Motor neuron (in vitro differentiated cells): ENCODE measurements at regions of chr7 and their contacts with region 1.

Region 1: DNA sequence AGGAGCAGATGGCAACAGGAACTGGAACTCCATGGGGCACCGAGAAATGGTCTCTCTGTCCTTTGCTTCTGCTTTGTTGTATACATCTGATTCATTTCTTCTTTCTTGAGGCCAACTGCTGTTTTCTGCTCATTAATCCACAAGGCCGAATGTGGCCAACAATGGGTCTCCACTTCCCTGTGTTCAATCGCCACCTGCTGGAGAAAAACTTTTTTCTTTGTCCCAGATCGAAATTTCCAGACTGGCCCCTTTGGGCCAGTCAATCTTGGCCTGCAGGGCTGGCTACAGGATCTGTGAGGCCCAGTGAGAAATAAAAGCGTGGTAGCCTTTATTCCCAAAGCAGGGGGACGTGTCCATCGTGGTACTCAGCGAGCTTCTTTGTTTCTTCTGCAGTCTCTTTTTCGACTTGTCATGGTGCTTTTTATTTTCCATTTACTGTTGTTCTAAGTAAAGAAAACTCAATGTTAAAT is 58.8 kb downstream of the PARP12 start:
- ATAC-seq: peak in 4 of 8 experiments; percentile 25 to 69 (median 64)
- H3K4me3 ChIP-seq: no peak overlapping the region
- H3K27ac ChIP-seq: no peak overlapping the region
- H3K4me1 ChIP-seq: no peaks in the 10 kb centered on the region

Region 2: GRCh38 chr7:139431010-139431409 is 572.9 kb before region 1 on chr7:
- in situ Hi-C with region 1: loop called in 1 of 9 experiments (anchors 25 kb)
- ATAC-seq: peak in 3 of 8 experiments; percentile 14 to 43 (median 26)
- H3K4me3 ChIP-seq: no peak overlapping the region
- H3K27ac ChIP-seq: no peak overlapping the region
- H3K4me1 ChIP-seq: no peaks in the 10 kb centered on the region

Region 3: GRCh38 chr7:139482662-139483469 is 521.1 kb before region 1 on chr7:
- in situ Hi-C with region 1: loop called in 1 of 9 experiments (anchors 25 kb)
- ATAC-seq: peak; percentile 29 to 69 (median 62)
- H3K4me3 ChIP-seq: peak overlapping the region; percentile 26 to 31 (median 28)
- H3K27ac ChIP-seq: no peak overlapping the region
- H3K4me1 ChIP-seq: no peaks in the 10 kb centered on the region

Region 4: GRCh38 chr7:139620676-139621344 is 383.1 kb before region 1 on chr7:
- in situ Hi-C with region 1: loop called in 5 of 9 experiments (anchors 25 kb)
- ATAC-seq: peak in 4 of 8 experiments; percentile 45 to 65 (median 60)
- H3K4me3 ChIP-seq: no peak overlapping the region
- H3K27ac ChIP-seq: no peak overlapping the region
- H3K4me1 ChIP-seq: no peaks in the 10 kb centered on the region

Region 5: DNA sequence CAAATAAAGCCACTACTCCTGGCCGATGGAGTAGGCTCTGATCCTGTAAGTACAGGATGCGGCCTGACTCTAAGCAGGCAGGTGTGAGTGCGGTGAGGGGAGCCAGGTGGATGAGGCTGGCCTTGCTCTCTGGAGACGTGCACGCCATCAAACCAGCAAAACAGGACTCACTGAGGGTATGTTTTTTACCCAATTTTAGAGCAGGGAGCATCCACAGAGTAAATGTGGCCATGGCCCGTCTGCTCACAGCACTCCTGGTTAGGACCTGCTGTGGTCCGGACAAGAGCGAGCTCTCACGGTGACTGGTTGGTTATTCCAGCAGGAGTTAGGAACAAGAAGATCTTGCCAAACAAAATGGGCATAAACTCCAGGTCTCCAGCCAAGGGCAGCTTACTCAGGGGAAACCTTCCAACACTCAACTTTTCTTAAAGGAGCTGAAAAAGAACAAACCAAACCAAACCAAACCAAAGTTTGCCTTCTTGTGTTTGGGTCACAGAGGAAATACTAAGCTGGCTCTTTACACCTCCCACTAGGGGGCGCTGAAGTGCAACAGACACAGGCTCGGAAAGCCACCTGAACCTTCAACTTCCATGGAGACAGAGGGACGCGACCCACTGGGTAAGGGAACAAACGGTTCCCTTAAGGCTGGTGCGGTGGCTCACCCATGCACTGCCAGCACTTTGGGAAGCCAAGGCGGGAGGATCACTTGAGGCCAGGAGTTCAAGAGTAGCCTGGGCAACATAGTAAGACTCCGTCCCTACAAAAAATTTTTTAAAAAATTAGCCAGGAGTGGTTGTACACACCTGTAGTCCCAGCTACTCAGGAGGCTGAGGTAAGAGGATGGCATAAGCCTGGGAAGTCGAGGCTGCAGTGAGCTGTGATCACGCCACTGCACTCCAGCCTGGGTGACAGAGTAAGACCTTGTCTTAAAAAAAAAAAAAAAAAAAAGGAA is 358.1 kb before region 1 on chr7:
- in situ Hi-C with region 1: loop called in 6 of 9 experiments (anchors 10 to 25 kb)
- ATAC-seq: peak in 4 of 8 experiments; percentile 28 to 87 (median 78)
- H3K4me3 ChIP-seq: no peak overlapping the region
- H3K27ac ChIP-seq: no peak overlapping the region
- H3K4me1 ChIP-seq: peaks cover 27% of the 10 kb centered on the region in 2 donors

Region 6: DNA sequence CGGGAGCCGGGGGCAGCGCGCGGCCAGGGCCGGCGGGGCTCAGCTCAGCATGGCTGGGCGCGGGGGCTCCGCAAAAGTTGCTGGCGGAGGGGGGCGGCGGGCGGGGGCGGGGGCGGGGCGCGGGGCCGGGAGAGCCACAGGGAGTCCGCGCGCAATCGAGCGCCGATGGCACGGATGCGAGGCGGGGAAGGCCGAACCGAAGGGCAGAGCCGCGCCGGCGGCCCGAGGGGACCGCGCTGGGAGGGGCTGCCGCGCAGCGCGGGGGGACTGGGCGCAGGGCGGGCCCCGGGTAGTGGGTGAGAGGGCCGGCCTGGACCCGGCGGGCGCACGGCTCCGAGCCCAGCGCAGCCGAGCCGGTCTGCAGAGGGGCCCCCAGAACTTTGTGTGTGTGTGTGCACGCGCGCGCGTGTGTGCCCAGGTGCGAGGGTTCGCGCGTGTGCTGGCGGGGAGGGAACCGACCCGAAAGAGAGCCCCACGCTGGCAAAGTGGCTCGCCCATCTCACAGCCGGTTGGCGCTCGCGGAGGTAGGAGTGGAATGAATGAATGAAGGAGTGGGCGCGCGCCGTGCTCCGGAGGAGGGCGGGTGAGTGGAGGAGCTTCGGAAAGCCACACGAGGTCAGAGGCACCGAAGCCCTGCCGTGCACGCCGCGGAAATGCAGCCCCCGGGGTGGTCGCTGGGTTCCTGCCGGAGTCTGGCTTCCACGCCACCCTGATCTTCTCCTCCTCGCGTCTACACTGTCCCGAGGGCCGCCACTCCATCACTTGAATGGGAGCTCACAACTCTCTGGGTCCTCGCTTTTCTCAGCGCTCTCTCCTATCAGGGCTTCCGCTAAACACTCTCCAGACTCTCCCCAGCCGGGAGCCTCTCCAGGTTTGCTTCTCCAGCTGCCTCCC is 225.8 kb before region 1 on chr7 and contains the start of gene HIPK2:
- in situ Hi-C with region 1: loop called in 1 of 9 experiments (anchors 10 kb)
- ATAC-seq: peak; percentile 73 to 87 (median 85)
- H3K4me3 ChIP-seq: peak within 1 kb of the TSS; percentile 61 to 99 (median 89)
- H3K27ac ChIP-seq: peak within 1 kb of the TSS; percentile 88
- H3K4me1 ChIP-seq: peaks cover 12 to 16% of the 10 kb centered on the region in 2 donors
- total RNA-seq, gene HIPK2: 2.0 to 34.9 (median 15.8) TPM